ENCODE measurements at regions of chr7 and their contacts with region 1.

Region 1: DNA sequence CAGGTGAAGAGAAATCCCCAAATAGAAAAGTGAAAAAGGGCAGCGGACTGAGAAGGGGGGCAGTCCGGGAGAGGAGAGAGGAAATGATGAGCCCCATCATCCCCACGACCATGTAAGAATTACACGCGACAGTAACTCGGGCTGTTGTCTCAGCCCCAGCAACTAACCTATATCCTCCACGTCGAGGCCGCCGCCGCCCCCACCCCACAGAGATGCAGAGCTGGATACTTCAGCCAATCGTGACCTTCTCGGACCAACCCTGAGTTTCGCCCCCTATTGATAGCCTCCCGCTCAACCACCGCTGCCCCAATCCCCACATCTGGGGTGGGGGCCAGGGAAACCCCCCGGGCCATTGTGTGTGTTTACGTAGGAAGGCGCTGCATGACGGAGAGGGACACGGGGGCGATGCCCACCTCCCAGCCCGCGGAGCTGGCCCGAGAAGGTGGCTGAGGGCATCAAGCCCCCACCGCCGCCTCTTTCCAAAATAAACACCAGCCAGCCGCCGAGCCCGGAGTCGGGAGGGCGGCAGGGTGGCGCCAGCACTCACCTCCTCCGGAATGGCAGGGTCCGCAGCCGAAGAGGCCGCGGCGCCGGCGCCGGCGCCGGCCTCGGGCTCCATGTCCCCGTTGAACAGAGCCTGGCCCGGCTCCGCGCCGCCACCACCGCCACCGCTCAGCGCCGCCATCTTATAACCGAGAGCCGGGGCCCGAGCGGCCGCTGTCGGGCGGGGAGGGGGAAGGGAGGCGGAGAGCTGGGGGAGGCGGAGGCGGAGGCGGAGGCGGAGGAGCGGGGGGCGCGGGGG is 509 bp downstream of the BRAF start:
- DNase-seq: peak; percentile 77
- H3K4me3 Mint-ChIP-seq: no peak overlapping the region
- H3K27ac Mint-ChIP-seq: no peak overlapping the region
- H3K4me1 Mint-ChIP-seq: peaks cover 10% of the 10 kb centered on the region
- H3K27me3 Mint-ChIP-seq: no peaks in the 10 kb centered on the region

Region 2: GRCh38 chr7:140673063-140673773 is 251.0 kb before region 1 on chr7:
- CTCF ChIA-PET with region 1: no interaction called
- intact Hi-C with region 1: loop called (anchors 2 kb)
- DNase-seq: peak; percentile 54
- H3K4me3 Mint-ChIP-seq: peak overlapping the region; percentile 83
- H3K27ac Mint-ChIP-seq: peak overlapping the region; percentile 66
- H3K4me1 Mint-ChIP-seq: peaks cover 39% of the 10 kb centered on the region
- H3K27me3 Mint-ChIP-seq: no peaks in the 10 kb centered on the region

Region 3: GRCh38 chr7:140810830-140811556 is 113.2 kb before region 1 on chr7:
- CTCF ChIA-PET with region 1: interaction called, 9 read pairs
- intact Hi-C with region 1: loop called (anchors 1 kb)
- DNase-seq: peak; percentile 78
- H3K4me3 Mint-ChIP-seq: no peak overlapping the region
- H3K27ac Mint-ChIP-seq: no peak overlapping the region
- H3K4me1 Mint-ChIP-seq: peaks cover 2% of the 10 kb centered on the region
- H3K27me3 Mint-ChIP-seq: no peaks in the 10 kb centered on the region

Region 4: DNA sequence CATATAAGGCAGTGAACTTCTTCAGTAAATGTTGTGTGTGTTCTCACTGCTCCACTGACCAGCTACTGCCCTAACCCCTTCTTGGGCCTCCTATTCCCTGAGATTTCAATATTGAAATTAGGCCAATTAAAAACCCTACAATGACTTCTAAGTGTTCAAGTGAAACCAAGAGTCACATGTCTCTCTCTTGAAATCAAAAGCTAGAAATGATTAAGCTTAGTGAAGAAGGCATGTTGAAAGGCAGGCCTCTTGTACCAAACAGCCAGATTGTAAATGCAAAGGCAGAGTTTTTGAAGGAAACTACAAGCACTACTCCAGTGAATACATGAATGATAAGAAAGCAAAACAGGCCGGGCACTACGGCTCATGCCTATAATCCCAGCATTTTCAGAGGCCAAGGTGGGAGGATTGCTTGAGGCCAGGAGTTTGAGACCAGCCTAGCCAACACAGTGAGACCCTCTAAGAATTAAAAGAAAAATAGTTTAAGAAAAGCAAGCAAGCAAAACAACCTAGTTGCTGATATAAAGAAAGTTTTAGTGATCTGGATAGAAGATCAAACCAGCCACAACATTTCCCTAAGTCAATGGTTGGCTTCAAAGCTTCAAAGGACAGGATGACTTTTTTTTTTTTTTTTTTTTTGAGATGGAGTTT is 21.8 kb before region 1 on chr7:
- CTCF ChIA-PET with region 1: interaction called, 3 read pairs
- intact Hi-C with region 1: loop called (anchors 1 kb)
- DNase-seq: no peak
- H3K4me3 Mint-ChIP-seq: peak overlapping the region; percentile 33
- H3K27ac Mint-ChIP-seq: peak overlapping the region; percentile 88
- H3K4me1 Mint-ChIP-seq: peaks cover 66% of the 10 kb centered on the region
- H3K27me3 Mint-ChIP-seq: no peaks in the 10 kb centered on the region

Measured in activated naive CD4-positive, alpha-beta T cell treated with anti-CD3 and anti-CD28 coated beads for 36 hours (primary cell).